Right lobe of liver (tissue), 6 donors: ENCODE measurements at regions of chr21 and their contacts with region 1.

Region 1: DNA sequence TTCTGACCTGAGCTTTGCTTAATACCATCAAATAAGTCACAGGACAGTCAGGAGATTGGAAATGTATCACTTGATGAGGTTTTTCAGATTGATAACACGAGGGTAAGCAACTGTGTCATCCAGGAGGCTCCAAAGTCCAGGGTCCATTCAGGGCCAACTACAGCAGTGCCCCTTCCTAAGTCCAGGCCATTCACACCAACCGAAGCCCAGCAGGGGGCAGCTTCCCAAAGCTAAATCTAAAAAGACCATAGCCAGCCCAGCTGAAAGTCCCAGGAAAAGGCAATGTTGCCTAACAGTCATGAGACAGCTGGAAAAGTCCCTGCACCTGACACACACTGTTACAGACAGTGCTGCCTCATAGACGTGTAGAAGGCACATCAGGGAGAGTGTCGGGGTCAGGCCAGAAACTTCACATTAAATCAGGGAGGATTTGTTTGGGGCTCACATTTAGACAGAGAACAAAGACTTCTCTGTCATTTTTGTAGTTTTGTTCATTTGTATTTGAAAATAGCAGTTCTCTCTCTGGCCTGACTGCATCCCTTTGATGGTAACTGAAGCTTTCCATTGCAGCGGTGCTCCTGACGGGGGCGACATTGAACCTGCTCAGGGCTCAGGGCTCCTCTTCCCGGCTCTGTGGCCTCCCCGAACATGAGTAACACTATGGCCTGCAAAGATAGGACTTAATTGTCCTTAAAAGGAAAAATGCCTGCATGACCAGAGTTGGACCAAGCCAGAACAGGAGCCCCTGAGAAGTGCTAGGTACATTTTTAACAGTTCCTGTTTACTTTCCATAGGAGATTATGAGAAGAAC is 200.4 kb downstream of the NRIP1 start:
- DNase-seq: peak; percentile 86 to 88 (median 88)
- ATAC-seq: peak; percentile 92 to 96 (median 95)
- H3K4me3 ChIP-seq: no peak overlapping the region
- H3K27ac ChIP-seq: peak overlapping the region; percentile 51 to 65 (median 58)
- H3K4me1 ChIP-seq: peaks cover 0 to 23% (median 10%) of the 10 kb centered on the region in 4 donors
- H3K27me3 ChIP-seq: no peaks in the 10 kb centered on the region
- CTCF ChIP-seq: peak; percentile 59 to 68 (median 66)
- POLR2A ChIP-seq: no peak

Region 2: DNA sequence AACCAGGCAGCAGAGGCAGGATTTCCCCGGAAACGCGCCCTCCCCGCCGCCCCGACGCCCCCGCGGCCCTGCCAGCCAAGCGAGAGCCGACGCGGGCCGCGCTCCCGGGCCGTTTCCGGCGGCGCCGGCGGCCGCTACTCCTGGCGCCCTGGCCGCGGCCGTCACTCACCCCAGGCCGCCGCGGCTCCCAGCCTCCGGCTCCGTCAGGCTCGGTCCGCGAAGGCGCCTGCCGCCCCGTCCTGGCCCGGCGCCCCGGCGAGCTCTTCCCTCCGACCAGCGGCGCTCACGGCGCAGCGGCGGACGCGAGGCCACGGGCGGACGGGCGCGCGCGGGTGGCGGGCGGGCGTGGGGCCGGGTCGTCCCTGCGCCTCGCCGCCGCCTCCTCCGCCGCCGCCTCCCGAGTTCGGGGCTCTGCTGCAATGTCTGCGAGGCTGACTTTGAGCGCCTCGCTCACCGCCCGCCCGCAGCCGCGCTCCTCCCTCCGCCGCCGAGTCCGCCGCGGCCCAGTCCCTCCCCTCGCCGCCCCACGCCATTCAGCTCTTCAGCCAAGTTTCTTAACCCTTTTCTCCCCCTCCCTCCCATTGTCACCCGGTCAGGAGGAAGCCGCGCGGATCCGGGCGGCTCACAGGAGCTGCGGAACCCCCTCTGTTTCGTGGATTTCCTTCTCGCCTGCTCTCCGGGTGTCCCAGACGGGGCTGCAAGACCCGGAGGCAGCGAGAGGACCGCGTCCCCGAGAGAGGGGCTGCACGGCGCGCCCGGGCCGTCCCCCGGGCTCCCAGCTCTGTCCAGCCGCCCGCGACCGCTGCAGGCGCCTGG is 200.4 kb after region 1 on chr21 and contains the start of gene NRIP1:
- intact Hi-C with region 1: loop called in 1 of 2 experiments (anchors 10 kb)
- DNase-seq: peak; percentile 93 to 95 (median 95)
- ATAC-seq: peak; percentile 83 to 92 (median 86)
- H3K4me3 ChIP-seq: peak within 1 kb of the TSS; percentile 67 to 84 (median 76)
- H3K27ac ChIP-seq: peak within 1 kb of the TSS; percentile 90 to 92 (median 92)
- H3K4me1 ChIP-seq: peaks cover 0 to 23% (median 11%) of the 10 kb centered on the region in 4 donors
- H3K27me3 ChIP-seq: no peaks in the 10 kb centered on the region
- CTCF ChIP-seq: no peak
- POLR2A ChIP-seq: peak; percentile 97
- total RNA-seq, gene NRIP1: 15.4 to 34.0 (median 21.5) TPM